ENCODE measurements at regions of chr3 and their contacts with region 1.

Region 1: DNA sequence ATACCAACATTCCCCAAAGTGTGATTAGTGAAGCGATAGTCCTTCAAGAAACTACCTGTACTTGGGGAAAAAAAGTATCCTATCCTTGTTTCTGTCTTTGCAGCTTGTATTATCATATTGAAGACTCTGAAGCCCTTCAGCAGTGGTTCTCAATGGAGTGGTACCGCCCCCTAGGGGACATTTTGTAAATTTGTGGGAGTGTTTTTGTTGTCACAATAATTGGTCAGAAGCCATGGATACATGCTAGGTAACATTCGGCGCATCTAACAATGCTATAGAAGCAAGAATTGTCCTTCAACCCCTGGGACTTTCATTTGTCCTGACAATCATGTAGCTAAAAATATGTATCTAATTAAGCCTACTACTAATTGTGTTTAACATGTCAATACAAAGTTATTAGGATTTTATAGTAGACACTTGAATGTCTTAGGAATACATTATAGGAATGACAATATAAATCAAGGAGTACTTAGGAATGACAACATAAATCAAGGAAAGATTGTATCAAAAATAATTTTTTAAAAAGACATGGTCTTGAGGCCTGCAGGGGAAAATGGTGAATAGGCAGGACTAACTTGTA is 53.7 kb downstream of the NMD3 start:
- DNase-seq: peak in 4 of 9 experiments; percentile 36 to 65 (median 46)
- ATAC-seq: peak; percentile 31
- H3K4me3 ChIP-seq: no peak overlapping the region
- H3K4me3 Mint-ChIP-seq: no peak overlapping the region
- H3K27ac ChIP-seq: no peak overlapping the region
- H3K27ac Mint-ChIP-seq: no peak overlapping the region
- H3K4me1 ChIP-seq: no peaks in the 10 kb centered on the region
- H3K4me1 Mint-ChIP-seq: peaks cover 2% of the 10 kb centered on the region
- H3K27me3 ChIP-seq: no peaks in the 10 kb centered on the region
- H3K27me3 Mint-ChIP-seq: no peaks in the 10 kb centered on the region
- CTCF ChIP-seq: peak; percentile 65

Region 2: GRCh38 chr3:160707187-160707794 is 567.5 kb before region 1 on chr3:
- CTCF ChIA-PET with region 1: no interaction called
- POLR2A ChIA-PET with region 1: no interaction called
- intact Hi-C with region 1: loop called (anchors 5 to 10 kb)
- DNase-seq: peak in 6 of 9 experiments; percentile 3 to 75 (median 23)
- ATAC-seq: peak; percentile 49
- H3K4me3 ChIP-seq: no peak overlapping the region
- H3K4me3 Mint-ChIP-seq: no peak overlapping the region
- H3K27ac ChIP-seq: no peak overlapping the region
- H3K27ac Mint-ChIP-seq: no peak overlapping the region
- H3K4me1 ChIP-seq: no peaks in the 10 kb centered on the region
- H3K4me1 Mint-ChIP-seq: no peaks in the 10 kb centered on the region
- H3K27me3 ChIP-seq: peaks cover 0 to 4% of the 10 kb centered on the region in 2 experiments
- H3K27me3 Mint-ChIP-seq: peaks cover 29% of the 10 kb centered on the region
- CTCF ChIP-seq: peak; percentile 65

Region 3: GRCh38 chr3:161096771-161097355 is 177.9 kb before region 1 on chr3:
- CTCF ChIA-PET with region 1: interaction called, 5 read pairs
- POLR2A ChIA-PET with region 1: no interaction called
- intact Hi-C with region 1: loop called (anchors 1 to 5 kb)
- DNase-seq: peak in 3 of 9 experiments; percentile 19 to 40 (median 28)
- ATAC-seq: no peak
- H3K4me3 ChIP-seq: no peak overlapping the region
- H3K4me3 Mint-ChIP-seq: no peak overlapping the region
- H3K27ac ChIP-seq: no peak overlapping the region
- H3K27ac Mint-ChIP-seq: no peak overlapping the region
- H3K4me1 ChIP-seq: no peaks in the 10 kb centered on the region
- H3K4me1 Mint-ChIP-seq: no peaks in the 10 kb centered on the region
- H3K27me3 ChIP-seq: no peaks in the 10 kb centered on the region
- H3K27me3 Mint-ChIP-seq: no peaks in the 10 kb centered on the region
- CTCF ChIP-seq: no peak

Region 4: DNA sequence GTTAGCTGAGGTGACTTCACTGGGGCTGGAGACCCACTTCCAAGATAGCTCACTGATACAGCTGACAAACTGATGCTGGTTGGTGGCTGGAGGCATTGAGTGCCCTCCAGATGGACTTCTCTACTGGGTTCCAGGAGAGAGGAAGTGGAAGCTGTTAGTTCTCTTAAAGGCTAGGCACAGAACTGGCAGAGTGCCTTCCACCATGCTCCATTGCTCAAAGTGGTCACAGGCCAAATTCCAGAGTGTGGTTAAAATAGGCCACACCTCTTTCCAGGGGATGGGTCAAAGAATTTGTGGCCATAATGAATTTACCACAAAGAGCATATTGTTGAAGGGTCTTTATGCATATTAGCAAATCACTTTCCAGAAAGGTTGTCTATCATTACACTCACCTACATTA is 20.5 kb after region 1 on chr3:
- CTCF ChIA-PET with region 1: interaction called, 12 read pairs
- POLR2A ChIA-PET with region 1: no interaction called
- intact Hi-C with region 1: no loop called
- DNase-seq: no peak
- ATAC-seq: no peak
- H3K4me3 ChIP-seq: no peak overlapping the region
- H3K4me3 Mint-ChIP-seq: no peak overlapping the region
- H3K27ac ChIP-seq: no peak overlapping the region
- H3K27ac Mint-ChIP-seq: no peak overlapping the region
- H3K4me1 ChIP-seq: no peaks in the 10 kb centered on the region
- H3K4me1 Mint-ChIP-seq: no peaks in the 10 kb centered on the region
- H3K27me3 ChIP-seq: peaks cover 0 to 2% of the 10 kb centered on the region in 2 experiments
- H3K27me3 Mint-ChIP-seq: peaks cover 3% of the 10 kb centered on the region
- CTCF ChIP-seq: no peak

Region 5: GRCh38 chr3:161423911-161424522 is 149.2 kb after region 1 on chr3:
- CTCF ChIA-PET with region 1: interaction called, 24 read pairs
- POLR2A ChIA-PET with region 1: no interaction called
- intact Hi-C with region 1: loop called (anchors 1 kb)
- DNase-seq: peak in 2 of 9 experiments; percentile 55 to 63
- ATAC-seq: peak; percentile 57
- H3K4me3 ChIP-seq: no peak overlapping the region
- H3K4me3 Mint-ChIP-seq: no peak overlapping the region
- H3K27ac ChIP-seq: no peak overlapping the region
- H3K27ac Mint-ChIP-seq: no peak overlapping the region
- H3K4me1 ChIP-seq: no peaks in the 10 kb centered on the region
- H3K4me1 Mint-ChIP-seq: no peaks in the 10 kb centered on the region
- H3K27me3 ChIP-seq: no peaks in the 10 kb centered on the region
- H3K27me3 Mint-ChIP-seq: peaks cover 5% of the 10 kb centered on the region
- CTCF ChIP-seq: peak; percentile 78

Measured in CD8-positive, alpha-beta T cell (primary cell).